ENCODE measurements at regions of chr19 and their contacts with region 1.

Region 1: GRCh38 chr19:1875646-1876495 is 9.4 kb downstream of the ABHD17A start:
- DNase-seq: peak; percentile 74 to 89 (median 84)
- ATAC-seq: peak; percentile 85 to 89
- H3K4me3 Mint-ChIP-seq: peak overlapping the region; percentile 92 to 99 (median 98)
- H3K27ac Mint-ChIP-seq: peak overlapping the region; percentile 88 to 99 (median 97)
- H3K4me1 Mint-ChIP-seq: peaks cover 13 to 39% (median 34%) of the 10 kb centered on the region in 4 donors
- H3K27me3 Mint-ChIP-seq: no peaks in the 10 kb centered on the region

Region 2: DNA sequence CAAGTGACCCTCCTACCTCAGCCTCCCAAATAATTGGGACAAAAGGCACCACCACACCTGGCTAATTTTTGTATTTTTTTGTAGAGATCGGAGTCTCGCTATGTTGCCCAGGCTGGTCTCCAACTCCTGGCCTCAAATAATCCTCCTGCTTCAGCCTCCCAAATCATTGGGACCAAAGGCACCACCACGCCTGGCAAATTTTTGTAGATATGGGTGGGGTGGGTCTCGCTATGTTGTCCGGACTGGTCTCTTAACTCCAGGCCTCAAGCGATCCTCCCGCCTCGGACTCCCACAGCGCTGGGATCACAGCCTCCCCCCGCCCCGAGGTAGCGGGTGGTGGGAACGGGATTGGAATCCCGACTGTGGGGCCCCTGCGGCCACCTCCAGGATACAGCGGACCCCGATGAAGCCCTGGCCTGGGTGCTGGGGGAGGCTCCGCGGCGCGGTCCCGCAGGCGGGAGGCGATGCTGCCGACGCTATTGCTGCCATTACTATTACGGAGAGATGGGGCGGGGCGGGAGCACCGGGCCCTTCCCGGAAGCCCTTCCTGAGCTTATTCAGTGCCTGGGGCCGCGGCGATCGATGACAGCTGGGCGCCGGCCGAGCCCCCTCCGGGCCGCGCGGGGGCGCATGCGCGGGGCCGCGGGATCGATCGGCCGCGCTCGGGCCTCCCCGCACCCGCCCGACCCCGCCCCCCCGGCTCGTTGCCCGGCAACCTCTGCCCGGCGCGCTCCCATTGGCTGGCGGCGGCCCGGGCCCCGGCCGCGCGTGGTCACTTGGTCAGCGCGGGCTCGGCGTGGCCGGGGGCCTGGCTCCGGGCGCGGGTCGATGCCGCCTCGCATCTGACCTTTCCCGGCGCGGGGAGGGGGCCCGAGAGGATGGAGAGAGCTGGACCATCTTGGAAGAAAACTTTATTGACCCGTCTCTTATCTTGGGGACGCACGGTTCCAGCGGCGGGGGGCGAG is 150.5 kb before region 1 on chr19:
- POLR2A ChIA-PET with region 1: no interaction called
- DNase-seq: peak in 2 of 10 donors; percentile 24 to 36
- ATAC-seq: peak; percentile 61 to 70
- H3K4me3 Mint-ChIP-seq: peak overlapping the region; percentile 53 to 78 (median 66)
- H3K27ac Mint-ChIP-seq: no peak overlapping the region
- H3K4me1 Mint-ChIP-seq: peaks cover 5 to 8% (median 7%) of the 10 kb centered on the region in 4 donors
- H3K27me3 Mint-ChIP-seq: peaks cover 20 to 67% (median 46%) of the 10 kb centered on the region in 5 donors

Region 3: GRCh38 chr19:1747285-1748114 is 128.4 kb before region 1 on chr19:
- POLR2A ChIA-PET with region 1: no interaction called
- DNase-seq: peak in 4 of 10 donors; percentile 15 to 73 (median 34)
- ATAC-seq: peak; percentile 56 to 65
- H3K4me3 Mint-ChIP-seq: peak overlapping the region in 9 of 10 donors; percentile 29 to 74 (median 64)
- H3K27ac Mint-ChIP-seq: peak overlapping the region in 1 of 10 donors; percentile 37
- H3K4me1 Mint-ChIP-seq: peaks cover 8 to 23% (median 19%) of the 10 kb centered on the region in 4 donors
- H3K27me3 Mint-ChIP-seq: peaks cover 21 to 65% (median 27%) of the 10 kb centered on the region in 5 donors

Region 4: DNA sequence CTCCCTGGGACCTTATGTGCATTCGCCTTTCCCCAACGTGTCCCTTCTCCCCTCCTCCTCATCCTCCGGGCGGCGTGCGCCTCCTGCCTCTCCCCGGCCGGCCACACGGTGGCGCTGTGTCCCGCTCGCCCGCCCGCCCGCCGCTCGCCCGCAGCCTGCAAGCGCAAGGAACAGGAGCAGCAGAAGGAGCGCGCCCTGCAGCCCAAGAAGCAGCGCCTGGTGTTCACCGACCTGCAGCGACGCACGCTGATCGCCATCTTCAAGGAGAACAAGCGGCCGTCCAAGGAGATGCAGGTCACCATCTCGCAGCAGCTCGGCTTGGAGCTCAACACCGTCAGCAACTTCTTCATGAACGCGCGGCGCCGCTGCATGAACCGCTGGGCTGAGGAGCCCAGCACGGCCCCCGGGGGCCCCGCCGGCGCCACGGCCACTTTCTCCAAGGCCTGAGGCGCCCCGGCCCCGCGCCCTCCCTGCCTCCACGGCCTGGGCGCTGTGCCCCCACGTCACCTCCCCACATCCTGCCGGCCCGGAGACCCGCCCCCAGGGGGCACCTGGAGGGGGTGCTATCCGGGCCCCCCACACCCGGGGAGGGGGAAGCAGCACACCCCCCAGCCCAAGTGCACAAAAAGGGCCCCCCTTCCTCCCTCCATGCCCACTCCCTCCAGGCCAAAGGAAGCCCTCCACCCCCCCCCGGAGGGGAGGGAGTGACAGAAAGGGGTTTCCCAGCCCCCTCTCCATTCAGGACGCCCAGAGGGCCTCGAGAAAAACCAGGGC is 100.7 kb before region 1 on chr19:
- POLR2A ChIA-PET with region 1: no interaction called
- DNase-seq: no peak
- ATAC-seq: no peak
- H3K4me3 Mint-ChIP-seq: peak overlapping the region in 1 of 10 donors; percentile 2
- H3K27ac Mint-ChIP-seq: no peak overlapping the region
- H3K4me1 Mint-ChIP-seq: peaks cover 2 to 11% (median 5%) of the 10 kb centered on the region in 4 donors
- H3K27me3 Mint-ChIP-seq: peaks cover 41 to 88% (median 61%) of the 10 kb centered on the region in 5 donors

Region 5: GRCh38 chr19:1822210-1822609 is 53.7 kb before region 1 on chr19:
- POLR2A ChIA-PET with region 1: no interaction called
- DNase-seq: no peak
- ATAC-seq: no peak
- H3K4me3 Mint-ChIP-seq: no peak overlapping the region
- H3K27ac Mint-ChIP-seq: no peak overlapping the region
- H3K4me1 Mint-ChIP-seq: peaks cover 0 to 11% (median 4%) of the 10 kb centered on the region in 4 donors
- H3K27me3 Mint-ChIP-seq: no peaks in the 10 kb centered on the region

Region 6: DNA sequence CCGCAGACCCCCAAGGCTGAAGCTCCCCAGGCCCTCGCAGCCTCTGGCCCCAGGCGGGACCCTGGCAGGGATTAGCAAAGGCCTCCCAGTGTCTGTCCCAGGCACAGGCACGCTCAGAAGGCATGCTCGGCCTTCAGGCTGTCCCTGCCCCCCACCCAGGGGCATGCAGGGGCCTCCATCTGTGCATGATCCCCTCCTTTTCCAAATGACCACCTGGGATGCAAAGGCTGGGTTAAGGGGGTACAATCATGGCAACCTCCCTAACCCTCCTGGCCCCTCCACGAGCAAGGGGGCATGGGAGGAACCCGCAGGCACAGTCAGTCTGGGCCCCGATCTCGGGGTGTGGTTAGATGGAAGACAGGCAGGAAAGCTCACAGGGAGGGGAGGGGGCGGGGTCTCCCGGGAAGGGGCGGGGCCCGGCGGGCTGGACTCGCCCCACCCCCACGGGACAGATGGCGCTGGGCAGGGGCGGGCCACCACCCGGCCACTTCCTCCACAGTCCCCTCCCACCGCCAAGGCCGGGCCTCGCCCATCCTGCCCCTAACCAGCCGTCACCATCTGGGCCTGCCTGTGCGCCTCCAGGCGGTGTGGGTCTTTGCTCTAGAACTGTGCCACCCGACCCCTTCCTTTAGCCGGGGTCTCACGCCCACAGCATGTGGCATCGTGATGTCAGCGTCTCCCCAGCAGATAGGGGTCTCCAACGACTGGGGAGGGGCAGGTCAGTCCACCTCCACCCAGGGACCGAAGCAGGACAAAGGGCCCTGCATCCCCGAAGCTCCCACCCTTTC is 20.6 kb before region 1 on chr19:
- POLR2A ChIA-PET with region 1: interaction called, 35 read pairs
- DNase-seq: peak; percentile 65 to 92 (median 70)
- ATAC-seq: peak; percentile 49 to 54
- H3K4me3 Mint-ChIP-seq: peak overlapping the region; percentile 78 to 98 (median 85)
- H3K27ac Mint-ChIP-seq: peak overlapping the region; percentile 84 to 98 (median 92)
- H3K4me1 Mint-ChIP-seq: peaks cover 24 to 70% (median 67%) of the 10 kb centered on the region in 4 donors
- H3K27me3 Mint-ChIP-seq: no peaks in the 10 kb centered on the region

Region 7: DNA sequence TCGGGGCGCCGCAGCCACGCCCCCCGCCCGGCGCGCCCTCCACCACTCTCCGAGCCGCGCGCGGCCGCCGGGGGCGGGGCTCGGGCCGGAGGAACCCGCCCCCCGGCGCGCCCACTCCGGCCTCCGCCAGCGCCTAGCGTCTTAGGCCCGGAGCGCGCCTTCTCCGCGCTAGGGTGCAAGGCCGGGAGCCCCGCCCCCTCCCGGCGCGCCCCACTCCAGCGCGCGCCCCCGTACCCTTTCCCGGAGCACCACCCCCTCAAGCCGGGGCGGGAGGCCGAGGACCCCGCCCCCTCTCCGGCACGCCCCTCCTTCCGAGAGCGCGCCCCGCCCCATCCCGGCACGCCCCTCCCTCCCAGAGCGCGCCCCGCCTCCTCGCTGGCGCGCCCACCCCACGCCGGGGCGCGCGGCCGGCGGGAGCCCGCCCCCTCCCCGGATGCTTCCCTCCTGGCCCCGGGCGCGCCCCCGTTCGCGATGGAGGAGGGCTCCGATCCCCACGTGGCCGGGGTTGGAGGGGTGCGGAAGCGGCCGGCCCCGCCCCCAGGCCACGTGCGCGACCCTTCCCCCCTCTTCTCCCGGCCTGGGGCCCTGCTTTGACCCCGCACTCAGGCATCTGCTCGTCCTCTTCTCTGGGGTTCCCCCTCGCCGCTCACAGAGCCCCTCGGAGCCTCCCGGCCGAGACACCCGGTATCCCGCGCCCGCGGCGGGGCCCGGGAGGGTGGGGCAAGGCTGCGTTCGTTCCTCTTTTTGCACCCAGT is 12.0 kb before region 1 on chr19:
- POLR2A ChIA-PET with region 1: interaction called, 35 read pairs
- DNase-seq: peak; percentile 88 to 98 (median 94)
- ATAC-seq: peak; percentile 59 to 71
- H3K4me3 Mint-ChIP-seq: peak overlapping the region; percentile 75 to 88 (median 78)
- H3K27ac Mint-ChIP-seq: peak overlapping the region; percentile 16 to 92 (median 85)
- H3K4me1 Mint-ChIP-seq: peaks cover 20 to 45% (median 44%) of the 10 kb centered on the region in 4 donors
- H3K27me3 Mint-ChIP-seq: no peaks in the 10 kb centered on the region

Region 8: GRCh38 chr19:1901940-1902441 is 26.1 kb after region 1 on chr19:
- POLR2A ChIA-PET with region 1: interaction called, 113 read pairs
- DNase-seq: no peak
- ATAC-seq: no peak
- H3K4me3 Mint-ChIP-seq: peak overlapping the region in 1 of 10 donors; percentile 7
- H3K27ac Mint-ChIP-seq: peak overlapping the region in 1 of 10 donors; percentile 74
- H3K4me1 Mint-ChIP-seq: peaks cover 7 to 52% (median 33%) of the 10 kb centered on the region in 4 donors
- H3K27me3 Mint-ChIP-seq: no peaks in the 10 kb centered on the region